Activated CD8-positive, alpha-beta T cell treated with anti-CD3 and anti-CD28 coated beads, Interleukin-2, amount 10 ng/mL, durations not matched to agents 7 days and 5 days (primary cell): ENCODE measurements at regions of chr20 and their contacts with region 1.

Region 1: GRCh38 chr20:45138561-45139300 is 14.5 kb upstream of the WFDC12 start:
- DNase-seq: peak; percentile 74
- ATAC-seq: peak; percentile 74
- H3K4me3 Mint-ChIP-seq: no peak overlapping the region
- H3K27ac Mint-ChIP-seq: no peak overlapping the region
- H3K4me1 Mint-ChIP-seq: no peaks in the 10 kb centered on the region
- H3K27me3 Mint-ChIP-seq: peaks cover 7% of the 10 kb centered on the region

Region 2: GRCh38 chr20:45111799-45112471 is 26.8 kb before region 1 on chr20:
- CTCF ChIA-PET with region 1: interaction called, 14 read pairs
- POLR2A ChIA-PET with region 1: no interaction called
- DNase-seq: no peak
- ATAC-seq: no peak
- H3K4me3 Mint-ChIP-seq: no peak overlapping the region
- H3K27ac Mint-ChIP-seq: no peak overlapping the region
- H3K4me1 Mint-ChIP-seq: peaks cover 5% of the 10 kb centered on the region
- H3K27me3 Mint-ChIP-seq: peaks cover 12% of the 10 kb centered on the region

Region 3: DNA sequence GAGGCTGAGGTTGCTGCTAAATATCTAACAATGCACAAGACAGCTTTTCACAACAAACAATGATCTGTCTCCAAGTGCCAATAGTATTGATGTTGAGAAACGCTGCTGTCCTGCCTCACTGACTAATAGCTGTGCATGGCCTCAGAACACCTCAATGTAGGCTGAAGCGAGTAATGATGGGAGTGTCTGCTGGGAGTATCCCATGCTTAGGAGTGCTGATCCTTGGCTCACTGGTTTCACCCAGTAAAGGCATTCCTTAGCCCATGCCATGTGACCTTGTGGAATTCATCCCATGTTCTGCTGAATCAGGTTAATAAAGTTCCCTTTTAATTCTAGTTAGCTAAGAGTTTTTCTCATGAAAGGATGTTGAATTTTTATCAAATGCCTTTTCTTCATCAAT is 10.7 kb before region 1 on chr20:
- CTCF ChIA-PET with region 1: interaction called, 19 read pairs
- POLR2A ChIA-PET with region 1: no interaction called
- DNase-seq: no peak
- ATAC-seq: no peak
- H3K4me3 Mint-ChIP-seq: no peak overlapping the region
- H3K27ac Mint-ChIP-seq: no peak overlapping the region
- H3K4me1 Mint-ChIP-seq: no peaks in the 10 kb centered on the region
- H3K27me3 Mint-ChIP-seq: peaks cover 54% of the 10 kb centered on the region

Region 4: GRCh38 chr20:45268531-45268930 is 129.8 kb after region 1 on chr20:
- CTCF ChIA-PET with region 1: no interaction called
- POLR2A ChIA-PET with region 1: no interaction called
- DNase-seq: peak; percentile 1
- ATAC-seq: no peak
- H3K4me3 Mint-ChIP-seq: no peak overlapping the region
- H3K27ac Mint-ChIP-seq: no peak overlapping the region
- H3K4me1 Mint-ChIP-seq: no peaks in the 10 kb centered on the region
- H3K27me3 Mint-ChIP-seq: peaks cover 46% of the 10 kb centered on the region